Activated B cell treated with CpG ODN at 0.5 μM for 24 hours (primary cell): ENCODE measurements at regions of chr5 and their contacts with region 1.

Region 1: GRCh38 chr5:142168365-142168764 is 59.8 kb downstream of the NDFIP1 start:
- DNase-seq: no peak
- ATAC-seq: no peak
- H3K4me3 Mint-ChIP-seq: no peak overlapping the region
- H3K27ac Mint-ChIP-seq: no peak overlapping the region
- H3K4me1 Mint-ChIP-seq: no peaks in the 10 kb centered on the region
- H3K27me3 Mint-ChIP-seq: peaks cover 16% of the 10 kb centered on the region
- CTCF ChIP-seq: no peak

Region 2: GRCh38 chr5:142319560-142320429 is 151.4 kb after region 1 on chr5:
- CTCF ChIA-PET with region 1: no interaction called
- POLR2A ChIA-PET with region 1: interaction called, 11 read pairs
- intact Hi-C with region 1: no loop called
- DNase-seq: no peak
- ATAC-seq: no peak
- H3K4me3 Mint-ChIP-seq: no peak overlapping the region
- H3K27ac Mint-ChIP-seq: no peak overlapping the region
- H3K4me1 Mint-ChIP-seq: peaks cover 40% of the 10 kb centered on the region
- H3K27me3 Mint-ChIP-seq: peaks cover 55% of the 10 kb centered on the region
- CTCF ChIP-seq: no peak

Region 3: GRCh38 chr5:143403593-143404415 is 1235.4 kb after region 1 on chr5 and contains the start of gene NR3C1:
- CTCF ChIA-PET with region 1: no interaction called
- POLR2A ChIA-PET with region 1: no interaction called
- intact Hi-C with region 1: no loop called
- DNase-seq: peak; percentile 87
- ATAC-seq: peak; percentile 72
- H3K4me3 Mint-ChIP-seq: peak within 1 kb of the TSS; percentile 95
- H3K27ac Mint-ChIP-seq: peak within 1 kb of the TSS; percentile 100
- H3K4me1 Mint-ChIP-seq: peaks cover 45% of the 10 kb centered on the region
- H3K27me3 Mint-ChIP-seq: no peaks in the 10 kb centered on the region
- CTCF ChIP-seq: no peak
- total RNA-seq, gene NR3C1: 105 and 110 TPM in 2 replicates